Ascending aorta (tissue), 2 donors: ENCODE measurements at regions of chr2 and their contacts with region 1.

Region 1: DNA sequence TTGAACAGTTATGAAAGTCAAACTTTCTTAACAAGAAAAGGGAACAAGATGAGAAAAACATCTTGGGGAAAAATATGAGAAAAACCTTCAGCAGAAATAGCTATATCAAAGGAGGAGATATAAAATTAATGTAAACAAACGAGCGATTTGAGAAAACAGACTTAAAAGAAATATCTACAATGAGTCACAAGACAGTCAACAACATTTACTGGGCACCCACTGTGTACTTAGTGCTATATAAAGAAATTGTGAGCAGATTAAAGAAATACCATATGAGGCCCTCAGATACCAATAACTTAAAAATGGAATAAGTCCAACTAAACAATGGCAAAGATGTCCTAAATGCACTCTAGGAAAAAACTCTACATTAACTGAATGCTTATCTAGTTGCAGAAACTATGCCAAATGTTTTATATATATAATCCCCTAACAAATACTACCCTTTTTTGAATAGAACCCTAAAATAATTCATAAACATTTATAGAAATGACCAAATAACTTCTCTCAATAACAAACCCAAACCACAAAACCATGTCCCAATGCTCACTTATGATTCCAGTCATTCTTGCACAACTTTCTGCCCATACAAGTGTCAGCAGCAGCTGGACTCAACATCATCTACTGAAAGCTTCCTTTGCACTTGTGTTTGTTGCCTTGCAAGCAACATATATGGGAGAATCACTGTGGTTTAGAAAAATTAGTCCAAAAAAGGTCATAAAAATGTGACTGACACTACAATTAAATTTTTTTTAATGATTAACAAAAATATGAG is 83.5 kb downstream of the COBLL1 start:
- DNase-seq: no peak
- H3K4me3 ChIP-seq: no peak overlapping the region
- H3K27ac ChIP-seq: peak overlapping the region in 1 of 2 donors; percentile 50
- H3K4me1 ChIP-seq: peaks cover 0 to 16% of the 10 kb centered on the region in 2 donors
- H3K27me3 ChIP-seq: no peaks in the 10 kb centered on the region
- CTCF ChIP-seq: no peak

Region 2: DNA sequence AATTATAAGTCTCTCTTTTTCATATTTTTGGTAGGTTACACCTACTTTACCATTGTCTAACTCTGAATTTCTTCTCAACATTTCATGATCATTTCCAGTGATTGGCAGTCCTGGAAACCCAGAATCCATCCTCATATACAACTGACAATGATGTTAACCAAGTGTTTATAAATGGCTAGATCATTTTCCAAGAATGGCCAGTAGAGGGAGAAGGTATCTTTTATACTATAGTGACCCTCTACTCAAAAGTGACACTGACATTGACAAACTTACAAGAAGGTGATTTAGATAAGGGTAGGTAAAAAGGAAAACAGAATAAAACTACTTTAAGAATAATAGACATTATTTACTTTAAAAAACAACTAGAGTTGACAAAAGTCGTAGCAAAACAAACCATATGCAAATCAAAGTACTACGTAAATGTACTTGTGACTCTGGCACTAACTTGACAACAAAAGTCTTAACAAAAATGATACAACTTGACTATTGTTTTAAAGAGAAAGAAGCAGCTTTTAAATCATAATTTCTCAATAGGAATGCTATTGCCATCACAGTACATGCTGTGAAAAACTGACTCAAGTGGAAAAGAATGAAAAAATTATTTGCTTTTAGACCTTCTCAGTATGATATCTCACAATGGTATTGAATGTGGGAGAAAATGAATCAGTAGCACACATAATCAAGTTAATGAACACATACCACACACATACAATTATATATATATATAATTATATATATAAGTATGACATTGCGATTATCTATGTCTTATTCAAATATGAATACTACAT is 60.2 kb before region 1 on chr2:
- intact Hi-C with region 1: no loop called
- DNase-seq: no peak
- H3K4me3 ChIP-seq: no peak overlapping the region
- H3K27ac ChIP-seq: no peak overlapping the region
- H3K4me1 ChIP-seq: no peaks in the 10 kb centered on the region
- H3K27me3 ChIP-seq: no peaks in the 10 kb centered on the region
- CTCF ChIP-seq: peak in 2 of 3 experiments; percentile 13 to 47

Region 3: GRCh38 chr2:164782323-164782722 is 24.2 kb after region 1 on chr2:
- intact Hi-C with region 1: loop called (anchors 2 kb)
- DNase-seq: peak in 1 of 2 donors; percentile 69
- H3K4me3 ChIP-seq: no peak overlapping the region
- H3K27ac ChIP-seq: peak overlapping the region; percentile 28 to 60
- H3K4me1 ChIP-seq: peaks cover 5 to 45% of the 10 kb centered on the region in 2 donors
- H3K27me3 ChIP-seq: no peaks in the 10 kb centered on the region
- CTCF ChIP-seq: no peak

Region 4: GRCh38 chr2:164890544-164890943 is 132.4 kb after region 1 on chr2:
- intact Hi-C with region 1: no loop called
- DNase-seq: no peak
- H3K4me3 ChIP-seq: no peak overlapping the region
- H3K27ac ChIP-seq: no peak overlapping the region
- H3K4me1 ChIP-seq: no peaks in the 10 kb centered on the region
- H3K27me3 ChIP-seq: no peaks in the 10 kb centered on the region
- CTCF ChIP-seq: no peak